Activated naive CD4-positive, alpha-beta T cell treated with anti-CD3 and anti-CD28 coated beads for 36 hours (primary cell): ENCODE measurements at regions of chr9 and their contacts with region 1.

Region 1: GRCh38 chr9:97632985-97633858 is at the starts of genes NCBP1 and TSTD2:
- DNase-seq: peak; percentile 98
- H3K4me3 Mint-ChIP-seq: peak within 1 kb of the TSS; percentile 88
- H3K27ac Mint-ChIP-seq: peak within 1 kb of the TSS; percentile 97
- H3K4me1 Mint-ChIP-seq: peaks cover 53% of the 10 kb centered on the region
- H3K27me3 Mint-ChIP-seq: no peaks in the 10 kb centered on the region
- total RNA-seq, gene NCBP1: 32.4 to 33.9 TPM
- total RNA-seq, gene TSTD2: 11.1 to 12.4 TPM

Region 2: DNA sequence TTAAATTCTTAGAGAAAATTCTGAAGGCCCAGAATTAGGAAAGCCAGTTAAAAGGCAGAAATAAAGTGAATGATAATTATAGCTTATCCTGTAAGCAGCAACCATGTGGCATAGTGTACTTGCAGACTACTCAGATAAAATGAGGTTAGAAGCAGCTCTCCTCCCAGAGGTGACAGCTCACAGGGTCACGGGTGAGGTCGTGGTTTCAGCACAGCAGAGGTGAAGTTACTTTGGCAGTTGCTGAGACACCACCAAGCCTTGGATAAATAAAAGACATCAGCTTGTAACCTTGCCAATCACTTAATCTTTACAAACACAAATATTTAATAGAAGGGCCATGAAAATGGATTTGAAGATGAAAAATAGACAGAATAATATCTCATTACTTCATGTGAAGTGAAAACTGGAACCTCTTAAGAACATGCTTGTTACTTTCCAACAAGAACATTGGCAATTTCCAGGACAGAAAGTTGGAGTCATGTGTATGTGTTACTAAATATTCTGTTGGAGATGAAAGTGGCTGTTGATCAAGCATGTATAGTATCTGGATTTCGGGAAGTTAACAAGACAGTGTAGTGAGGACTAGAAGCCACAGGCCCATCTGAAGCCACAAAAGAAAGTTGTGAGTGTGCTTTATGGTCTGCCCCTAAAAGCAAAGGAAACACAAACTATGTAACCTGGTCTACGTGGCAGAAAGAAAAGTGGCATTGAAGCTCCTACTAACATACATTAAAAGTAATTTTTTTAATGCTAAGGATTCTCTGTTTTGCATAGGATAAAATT is 1623.3 kb before region 1 on chr9:
- CTCF ChIA-PET with region 1: no interaction called
- intact Hi-C with region 1: loop called (anchors 10 kb)
- DNase-seq: peak; percentile 83
- H3K4me3 Mint-ChIP-seq: no peak overlapping the region
- H3K27ac Mint-ChIP-seq: peak overlapping the region; percentile 73
- H3K4me1 Mint-ChIP-seq: peaks cover 54% of the 10 kb centered on the region
- H3K27me3 Mint-ChIP-seq: no peaks in the 10 kb centered on the region

Region 3: DNA sequence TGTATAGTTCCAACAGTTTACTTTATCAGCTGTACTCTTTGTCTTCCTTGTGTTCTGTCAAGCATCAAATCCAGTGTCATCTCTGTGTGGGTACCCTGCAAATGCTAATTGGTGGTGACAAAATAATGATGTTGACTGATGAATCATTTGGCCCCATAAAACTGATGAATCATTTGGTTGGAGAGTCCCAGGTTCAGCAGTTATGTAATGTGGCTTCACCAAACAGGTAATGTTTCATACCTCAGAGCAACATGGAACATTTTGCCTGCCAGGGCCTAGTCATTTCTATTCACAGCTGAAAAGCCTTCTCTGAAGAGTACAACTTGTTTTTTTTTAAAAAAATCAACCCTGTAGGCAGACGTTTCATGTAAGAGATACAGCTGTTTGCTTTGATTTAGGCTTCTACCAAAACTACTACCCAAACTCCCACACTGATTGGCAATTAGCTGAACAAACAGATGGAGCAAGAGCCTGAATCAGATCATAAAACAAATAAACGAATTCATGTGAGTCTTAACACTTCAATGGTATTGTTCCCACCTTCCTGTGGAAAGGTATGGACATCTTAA is 570.7 kb before region 1 on chr9:
- CTCF ChIA-PET with region 1: no interaction called
- intact Hi-C with region 1: loop called (anchors 1 kb)
- DNase-seq: peak; percentile 82
- H3K4me3 Mint-ChIP-seq: no peak overlapping the region
- H3K27ac Mint-ChIP-seq: peak overlapping the region; percentile 85
- H3K4me1 Mint-ChIP-seq: peaks cover 15% of the 10 kb centered on the region
- H3K27me3 Mint-ChIP-seq: peaks cover 7% of the 10 kb centered on the region

Region 4: DNA sequence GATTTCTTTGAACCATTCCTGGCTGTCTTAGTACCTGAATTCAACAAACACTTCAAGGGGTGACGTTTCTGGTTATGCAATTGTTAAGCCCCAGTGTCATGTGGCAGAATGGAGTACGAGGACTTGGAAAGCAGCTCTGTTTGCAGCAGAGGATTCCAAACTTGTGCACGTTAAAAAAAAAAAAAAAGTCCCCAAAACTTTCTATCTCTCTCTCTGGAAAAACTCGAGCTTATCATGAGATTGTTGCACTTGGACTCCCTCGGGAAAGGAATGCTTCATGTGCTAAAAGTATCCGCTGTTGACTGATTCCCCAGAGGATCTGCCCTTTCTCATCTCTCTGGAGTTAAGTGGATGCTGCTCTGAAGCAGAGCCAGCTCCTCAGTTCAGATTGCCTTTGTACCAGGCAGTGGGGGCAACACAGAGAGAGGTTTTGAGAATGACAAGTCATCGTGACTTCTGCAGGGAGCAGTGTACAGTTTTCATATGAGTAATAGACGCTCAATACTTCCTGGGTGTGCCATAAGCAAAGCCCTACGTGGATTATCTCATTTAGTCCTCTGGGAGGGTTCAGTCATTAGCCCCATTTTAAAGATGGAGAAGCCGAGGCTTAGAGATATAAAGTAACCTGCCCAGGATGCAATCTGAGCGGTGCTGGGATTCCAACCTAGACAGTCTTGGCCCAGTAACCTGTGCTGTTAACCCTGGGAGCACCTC is 103.7 kb before region 1 on chr9:
- CTCF ChIA-PET with region 1: no interaction called
- intact Hi-C with region 1: no loop called
- DNase-seq: peak; percentile 50
- H3K4me3 Mint-ChIP-seq: no peak overlapping the region
- H3K27ac Mint-ChIP-seq: no peak overlapping the region
- H3K4me1 Mint-ChIP-seq: peaks cover 2% of the 10 kb centered on the region
- H3K27me3 Mint-ChIP-seq: no peaks in the 10 kb centered on the region

Region 5: GRCh38 chr9:97615439-97616072 is 17.7 kb before region 1 on chr9:
- CTCF ChIA-PET with region 1: interaction called, 19 read pairs
- intact Hi-C with region 1: loop called (anchors 1 kb)
- DNase-seq: peak; percentile 79
- H3K4me3 Mint-ChIP-seq: no peak overlapping the region
- H3K27ac Mint-ChIP-seq: no peak overlapping the region
- H3K4me1 Mint-ChIP-seq: peaks cover 15% of the 10 kb centered on the region
- H3K27me3 Mint-ChIP-seq: no peaks in the 10 kb centered on the region

Region 6: DNA sequence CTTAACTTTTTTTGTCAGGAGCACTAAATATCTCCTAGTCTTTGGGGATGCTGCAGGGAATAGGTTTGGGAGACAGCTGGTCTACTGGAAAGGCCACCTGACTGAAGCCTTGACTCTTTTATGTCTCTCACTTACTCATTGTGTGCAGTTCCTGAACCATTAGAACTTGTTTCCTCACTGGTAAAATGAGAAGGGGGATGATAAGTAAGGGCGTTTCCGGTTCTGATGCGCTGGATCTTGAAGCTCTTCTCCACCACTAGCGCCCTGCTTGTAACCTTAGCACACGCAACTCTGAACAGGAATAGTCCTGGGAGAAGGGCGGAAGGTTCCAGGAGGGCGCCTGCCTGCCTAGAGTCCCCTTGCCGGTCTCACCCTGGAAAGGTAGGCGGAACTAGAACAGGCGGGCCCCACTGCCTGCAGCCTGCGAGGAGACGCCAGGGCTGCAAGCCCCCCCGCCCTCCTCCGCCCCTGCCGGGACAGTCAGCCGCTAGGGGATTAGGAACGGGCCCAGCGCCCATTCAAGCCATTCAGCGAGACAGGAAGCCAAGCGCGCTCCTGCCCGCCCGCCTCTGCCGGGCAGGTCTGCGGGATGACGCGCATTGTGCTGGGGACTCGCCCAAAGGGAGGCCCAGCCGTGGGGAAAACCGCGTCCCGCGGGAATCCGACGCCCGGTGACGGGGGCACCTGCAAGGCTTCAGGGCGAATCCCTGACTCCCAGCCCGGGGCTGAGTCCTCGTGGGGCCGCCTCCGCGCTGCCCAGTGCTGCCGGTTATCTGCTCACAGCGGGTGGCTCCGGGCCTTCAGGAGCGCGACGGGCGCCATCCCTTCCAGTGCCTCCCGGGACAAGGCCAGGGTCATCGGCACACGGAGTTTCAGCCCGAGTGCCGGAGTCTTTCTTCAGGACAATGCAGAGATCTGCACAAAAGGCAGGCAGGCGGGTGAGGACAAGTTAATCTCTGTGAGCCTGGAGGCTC is 107.9 kb after region 1 on chr9:
- CTCF ChIA-PET with region 1: no interaction called
- intact Hi-C with region 1: loop called (anchors 10 kb)
- DNase-seq: peak; percentile 73
- H3K4me3 Mint-ChIP-seq: peak overlapping the region; percentile 65
- H3K27ac Mint-ChIP-seq: no peak overlapping the region
- H3K4me1 Mint-ChIP-seq: peaks cover 8% of the 10 kb centered on the region
- H3K27me3 Mint-ChIP-seq: peaks cover 57% of the 10 kb centered on the region

Region 7: GRCh38 chr9:97759581-97760288 is 126.5 kb after region 1 on chr9:
- CTCF ChIA-PET with region 1: no interaction called
- intact Hi-C with region 1: no loop called
- DNase-seq: no peak
- H3K4me3 Mint-ChIP-seq: no peak overlapping the region
- H3K27ac Mint-ChIP-seq: no peak overlapping the region
- H3K4me1 Mint-ChIP-seq: no peaks in the 10 kb centered on the region
- H3K27me3 Mint-ChIP-seq: peaks cover 16% of the 10 kb centered on the region

Region 8: DNA sequence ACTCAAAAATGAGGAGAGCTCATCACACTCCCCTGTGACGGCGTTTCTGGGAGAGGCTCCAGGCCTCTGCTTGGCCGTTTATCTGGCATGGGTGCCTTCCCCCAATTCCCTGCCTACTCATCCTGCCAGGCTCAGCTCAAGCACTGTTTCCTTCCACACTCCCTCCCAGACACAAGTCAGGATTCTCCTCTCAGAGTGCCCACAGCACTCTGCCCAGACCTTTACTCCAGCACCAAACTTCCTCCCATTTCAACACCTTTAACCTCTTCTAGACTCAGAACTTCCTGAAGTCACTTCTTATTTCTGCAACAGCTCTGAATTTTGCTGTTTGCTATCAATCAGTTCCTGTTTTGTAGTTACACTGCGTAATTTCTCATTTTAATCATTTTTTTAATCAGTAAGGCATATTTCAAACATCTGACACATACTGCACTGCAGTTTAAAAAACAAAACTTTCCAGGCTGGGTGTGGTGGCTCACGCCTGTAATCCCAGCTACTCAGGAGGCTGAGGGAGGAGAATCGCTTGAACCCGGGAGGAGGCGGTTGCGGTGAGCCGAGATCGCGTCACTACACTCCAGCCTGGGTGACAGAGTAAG is 273.1 kb after region 1 on chr9:
- CTCF ChIA-PET with region 1: no interaction called
- intact Hi-C with region 1: loop called (anchors 2 kb)
- DNase-seq: peak; percentile 66
- H3K4me3 Mint-ChIP-seq: peak overlapping the region; percentile 80
- H3K27ac Mint-ChIP-seq: peak overlapping the region; percentile 98
- H3K4me1 Mint-ChIP-seq: peaks cover 69% of the 10 kb centered on the region
- H3K27me3 Mint-ChIP-seq: no peaks in the 10 kb centered on the region